A673 (cell line): ENCODE measurements at regions of chr15 and their contacts with region 1.

Region 1: GRCh38 chr15:90143166-90143655 is 40.9 kb upstream of the IDH2 start:
- DNase-seq: peak; percentile 78
- H3K4me3 ChIP-seq: no peak overlapping the region
- H3K27ac ChIP-seq: no peak overlapping the region
- H3K4me1 ChIP-seq: no peaks in the 10 kb centered on the region
- H3K27me3 ChIP-seq: no peaks in the 10 kb centered on the region
- CTCF ChIP-seq: peak; percentile 81

Region 2: GRCh38 chr15:89457097-89457496 is 686.1 kb before region 1 on chr15:
- CTCF ChIA-PET with region 1: no interaction called
- POLR2A ChIA-PET with region 1: no interaction called
- intact Hi-C with region 1: no loop called
- DNase-seq: peak; percentile 56
- H3K4me3 ChIP-seq: no peak overlapping the region
- H3K27ac ChIP-seq: no peak overlapping the region
- H3K4me1 ChIP-seq: no peaks in the 10 kb centered on the region
- H3K27me3 ChIP-seq: no peaks in the 10 kb centered on the region
- CTCF ChIP-seq: no peak

Region 3: DNA sequence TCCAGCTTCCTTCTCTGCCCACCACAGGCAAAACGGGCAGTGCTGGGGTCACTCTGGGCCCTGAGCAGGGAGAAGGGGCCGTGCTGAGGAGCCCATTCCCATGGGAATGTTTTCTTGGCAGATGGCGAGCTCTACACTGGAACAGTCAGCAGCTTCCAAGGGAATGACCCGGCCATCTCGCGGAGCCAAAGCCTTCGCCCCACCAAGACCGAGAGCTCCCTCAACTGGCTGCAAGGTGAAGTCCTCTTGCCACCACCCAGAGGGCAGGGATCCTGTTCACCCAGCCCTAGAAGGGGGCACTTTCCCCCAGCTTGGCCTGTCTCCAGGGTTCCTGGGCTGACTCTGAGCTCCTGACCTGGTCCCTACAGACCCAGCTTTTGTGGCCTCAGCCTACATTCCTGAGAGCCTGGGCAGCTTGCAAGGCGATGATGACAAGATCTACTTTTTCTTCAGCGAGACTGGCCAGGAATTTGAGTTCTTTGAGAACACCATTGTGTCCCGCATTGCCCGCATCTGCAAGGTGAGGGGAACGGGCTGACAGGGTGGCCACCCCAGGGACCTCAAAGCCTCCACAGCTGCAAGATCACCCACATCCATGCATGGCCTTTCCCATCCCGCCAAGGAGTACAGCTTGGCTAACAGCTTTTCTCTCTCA is 78.2 kb after region 1 on chr15:
- CTCF ChIA-PET with region 1: interaction called, 4 read pairs
- POLR2A ChIA-PET with region 1: no interaction called
- intact Hi-C with region 1: loop called (anchors 1 kb)
- DNase-seq: peak; percentile 67
- H3K4me3 ChIP-seq: no peak overlapping the region
- H3K27ac ChIP-seq: no peak overlapping the region
- H3K4me1 ChIP-seq: no peaks in the 10 kb centered on the region
- H3K27me3 ChIP-seq: no peaks in the 10 kb centered on the region
- CTCF ChIP-seq: peak; percentile 62

Region 4: GRCh38 chr15:90233376-90234095 is 90.3 kb after region 1 on chr15 and contains the start of gene CIB1:
- CTCF ChIA-PET with region 1: interaction called, 14 read pairs
- POLR2A ChIA-PET with region 1: no interaction called
- intact Hi-C with region 1: no loop called
- DNase-seq: peak; percentile 98
- H3K4me3 ChIP-seq: peak within 1 kb of the TSS; percentile 58
- H3K27ac ChIP-seq: peak within 1 kb of the TSS; percentile 66
- H3K4me1 ChIP-seq: peaks cover 5% of the 10 kb centered on the region
- H3K27me3 ChIP-seq: no peaks in the 10 kb centered on the region
- CTCF ChIP-seq: no peak
- total RNA-seq, gene CIB1: 39.7 and 41.9 TPM in 2 replicates

Region 5: GRCh38 chr15:90286678-90287077 is 143.5 kb after region 1 on chr15:
- CTCF ChIA-PET with region 1: no interaction called
- POLR2A ChIA-PET with region 1: no interaction called
- intact Hi-C with region 1: loop called (anchors 5 kb)
- DNase-seq: peak; percentile 62
- H3K4me3 ChIP-seq: no peak overlapping the region
- H3K27ac ChIP-seq: no peak overlapping the region
- H3K4me1 ChIP-seq: no peaks in the 10 kb centered on the region
- H3K27me3 ChIP-seq: no peaks in the 10 kb centered on the region
- CTCF ChIP-seq: peak; percentile 68

Region 6: GRCh38 chr15:90782429-90782828 is 639.2 kb after region 1 on chr15:
- CTCF ChIA-PET with region 1: interaction called, 11 read pairs
- POLR2A ChIA-PET with region 1: no interaction called
- intact Hi-C with region 1: no loop called
- DNase-seq: no peak
- H3K4me3 ChIP-seq: no peak overlapping the region
- H3K27ac ChIP-seq: no peak overlapping the region
- H3K4me1 ChIP-seq: no peaks in the 10 kb centered on the region
- H3K27me3 ChIP-seq: no peaks in the 10 kb centered on the region
- CTCF ChIP-seq: no peak

Region 7: DNA sequence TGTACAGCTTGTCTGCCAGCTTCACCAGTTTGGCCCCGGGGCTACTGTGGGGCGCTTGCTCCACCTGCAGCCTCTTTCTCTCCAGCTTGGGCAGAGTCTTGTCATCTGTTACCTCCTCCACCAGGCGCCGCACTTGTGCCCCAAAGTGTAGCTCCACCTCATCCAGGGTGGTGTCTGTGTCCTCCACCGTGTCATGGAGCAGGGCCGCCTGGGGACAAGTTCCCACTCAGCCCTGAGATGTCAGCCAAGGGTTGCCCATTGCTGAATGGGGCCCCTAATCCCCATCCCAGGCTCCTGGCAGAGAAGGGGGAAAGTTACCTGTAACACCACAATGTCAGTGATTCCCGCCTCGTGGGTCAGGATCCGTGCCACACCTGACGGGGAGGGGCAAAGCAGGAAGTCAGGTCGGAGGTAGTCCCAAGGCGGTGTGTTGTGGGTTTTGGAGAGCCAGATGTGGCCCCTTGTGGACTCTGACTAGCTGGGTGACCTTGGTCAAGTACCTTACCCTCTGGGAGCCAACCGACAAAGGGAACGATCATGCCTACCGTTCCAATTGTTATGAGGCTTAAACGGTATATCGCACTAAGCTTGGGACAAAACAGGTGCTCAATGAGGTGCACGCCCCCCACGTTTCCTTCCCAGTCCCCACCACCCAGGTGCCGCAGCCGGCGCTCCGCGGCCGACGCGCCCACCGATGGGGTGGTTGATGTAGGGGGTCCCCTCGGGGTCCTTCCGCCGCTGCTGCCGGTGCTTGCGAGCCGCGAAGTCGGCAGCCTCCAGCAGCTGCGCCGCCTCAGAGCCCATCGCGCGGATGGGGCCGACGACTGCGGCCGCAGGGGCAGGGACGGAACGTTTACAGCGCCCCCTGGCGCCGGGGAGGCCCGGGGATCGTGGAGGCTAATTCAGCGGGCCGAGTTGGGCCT is 788.8 kb after region 1 on chr15 and contains the start of gene HDDC3:
- CTCF ChIA-PET with region 1: no interaction called
- POLR2A ChIA-PET with region 1: no interaction called
- intact Hi-C with region 1: loop called (anchors 10 kb)
- DNase-seq: peak; percentile 88
- H3K4me3 ChIP-seq: peak within 1 kb of the TSS; percentile 96
- H3K27ac ChIP-seq: peak within 1 kb of the TSS; percentile 86
- H3K4me1 ChIP-seq: peaks cover 27% of the 10 kb centered on the region
- H3K27me3 ChIP-seq: no peaks in the 10 kb centered on the region
- CTCF ChIP-seq: peak; percentile 97
- total RNA-seq, gene HDDC3: 22.6 and 23.9 TPM in 2 replicates

Region 8: GRCh38 chr15:91264651-91265351 is 1121.6 kb after region 1 on chr15:
- CTCF ChIA-PET with region 1: no interaction called
- POLR2A ChIA-PET with region 1: interaction called, 12 read pairs
- intact Hi-C with region 1: no loop called
- DNase-seq: no peak
- H3K4me3 ChIP-seq: no peak overlapping the region
- H3K27ac ChIP-seq: no peak overlapping the region
- H3K4me1 ChIP-seq: no peaks in the 10 kb centered on the region
- H3K27me3 ChIP-seq: no peaks in the 10 kb centered on the region
- CTCF ChIP-seq: no peak